Esophagus muscularis mucosa (tissue), 4 donors: ENCODE measurements at regions of chr1 and their contacts with region 1.

Region 1: DNA sequence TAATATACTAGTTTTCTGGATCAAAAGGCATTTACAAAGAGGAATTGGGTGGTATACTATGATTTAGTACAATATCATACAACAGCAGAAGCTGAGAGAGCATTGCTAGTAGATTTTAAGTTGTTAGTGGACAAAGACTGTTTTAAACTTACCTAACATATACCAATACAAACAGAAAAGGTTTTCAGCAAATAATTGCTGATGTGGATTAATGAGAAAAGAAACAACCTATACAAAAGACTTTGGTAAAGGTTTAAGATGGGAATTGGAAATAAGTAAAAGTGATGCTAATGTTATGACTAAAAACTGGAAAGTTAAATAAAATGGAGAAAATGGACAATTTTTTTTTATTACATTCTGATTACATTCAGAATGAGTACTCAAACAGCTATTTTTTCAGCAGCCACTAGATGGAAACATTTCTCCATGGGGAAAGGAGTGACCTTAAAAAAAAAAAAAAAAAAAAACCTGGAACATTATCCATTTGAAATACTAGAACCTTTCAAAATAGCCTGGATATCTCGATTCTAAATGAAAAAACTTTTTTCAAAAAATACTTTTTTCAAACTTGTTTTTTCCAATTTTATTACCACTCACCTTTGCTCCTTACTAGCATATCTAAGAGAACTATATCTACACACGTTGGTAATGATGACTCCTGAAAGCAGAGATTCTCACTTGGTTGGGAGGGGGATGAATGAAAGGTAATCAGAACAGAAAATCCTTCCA is 55.4 kb downstream of the EPRS1 start:
- DNase-seq: no peak
- H3K4me3 ChIP-seq: no peak overlapping the region
- H3K27ac ChIP-seq: no peak overlapping the region
- H3K4me1 ChIP-seq: no peaks in the 10 kb centered on the region
- H3K27me3 ChIP-seq: no peaks in the 10 kb centered on the region
- CTCF ChIP-seq: peak; percentile 35 to 69 (median 56)
- EP300 ChIP-seq: no peak
- POLR2A ChIP-seq: no peak

Region 2: GRCh38 chr1:220056374-220056773 is 65.4 kb after region 1 on chr1:
- intact Hi-C with region 1: no loop called
- DNase-seq: no peak
- H3K4me3 ChIP-seq: no peak overlapping the region
- H3K27ac ChIP-seq: no peak overlapping the region
- H3K4me1 ChIP-seq: no peaks in the 10 kb centered on the region
- H3K27me3 ChIP-seq: no peaks in the 10 kb centered on the region
- CTCF ChIP-seq: no peak
- EP300 ChIP-seq: no peak
- POLR2A ChIP-seq: no peak

Region 3: DNA sequence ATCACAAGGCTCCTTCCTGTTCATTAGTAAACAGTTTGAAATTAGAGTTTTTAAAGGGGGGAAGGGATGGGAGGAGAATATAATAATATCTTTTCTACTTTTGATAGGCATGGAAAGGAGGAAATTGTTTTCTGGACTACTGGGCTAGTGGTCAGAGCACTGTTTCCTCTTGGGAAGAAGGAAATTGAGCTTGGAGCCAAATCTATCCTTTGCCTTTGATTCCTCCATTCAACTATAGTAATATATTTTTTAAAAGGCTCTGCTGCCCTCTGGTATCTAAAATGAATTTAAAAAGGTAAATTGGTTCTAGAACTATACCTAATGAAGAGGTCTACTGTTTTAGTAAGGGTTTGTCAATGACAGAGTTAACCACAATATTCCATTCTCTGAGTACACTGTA is 108.9 kb after region 1 on chr1:
- intact Hi-C with region 1: loop called (anchors 10 kb)
- DNase-seq: no peak
- H3K4me3 ChIP-seq: no peak overlapping the region
- H3K27ac ChIP-seq: no peak overlapping the region
- H3K4me1 ChIP-seq: peaks cover 11 to 17% (median 13%) of the 10 kb centered on the region in 4 donors
- H3K27me3 ChIP-seq: no peaks in the 10 kb centered on the region
- CTCF ChIP-seq: no peak
- EP300 ChIP-seq: no peak
- POLR2A ChIP-seq: no peak